ENCODE measurements at regions of chr4 and their contacts with region 1.

Region 1: DNA sequence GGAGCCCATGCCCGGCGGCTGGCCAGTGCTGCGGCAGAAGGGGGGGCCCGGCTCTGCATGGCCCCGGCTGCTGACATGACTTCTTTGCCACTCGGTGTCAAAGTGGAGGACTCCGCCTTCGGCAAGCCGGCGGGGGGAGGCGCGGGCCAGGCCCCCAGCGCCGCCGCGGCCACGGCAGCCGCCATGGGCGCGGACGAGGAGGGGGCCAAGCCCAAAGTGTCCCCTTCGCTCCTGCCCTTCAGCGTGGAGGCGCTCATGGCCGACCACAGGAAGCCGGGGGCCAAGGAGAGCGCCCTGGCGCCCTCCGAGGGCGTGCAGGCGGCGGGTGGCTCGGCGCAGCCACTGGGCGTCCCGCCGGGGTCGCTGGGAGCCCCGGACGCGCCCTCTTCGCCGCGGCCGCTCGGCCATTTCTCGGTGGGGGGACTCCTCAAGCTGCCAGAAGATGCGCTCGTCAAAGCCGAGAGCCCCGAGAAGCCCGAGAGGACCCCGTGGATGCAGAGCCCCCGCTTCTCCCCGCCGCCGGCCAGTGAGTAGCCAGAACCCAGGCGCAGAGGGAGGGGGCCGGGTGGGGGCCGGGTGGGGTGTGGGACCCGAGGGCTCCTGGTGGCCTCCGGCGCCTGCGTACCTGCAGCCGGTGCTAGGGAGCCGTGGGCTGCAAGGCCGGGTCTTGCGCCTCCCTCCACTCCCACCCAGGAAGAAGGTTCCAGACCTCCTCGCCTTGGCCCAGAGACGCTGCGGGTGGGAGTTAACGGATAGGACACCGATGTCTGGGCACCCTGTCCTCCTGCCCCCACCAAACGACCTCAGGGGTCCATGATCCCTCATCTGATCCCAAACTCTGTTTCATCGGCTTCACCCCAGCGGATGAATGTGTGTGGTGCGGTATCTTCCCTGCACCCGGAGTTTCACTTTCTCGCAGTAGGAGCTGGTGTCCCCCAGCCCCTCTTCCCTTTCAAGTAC is 658 bp downstream of the MSX1 start:
- DNase-seq: no peak
- H3K4me3 ChIP-seq: peak overlapping the region; percentile 48 to 53
- H3K27ac ChIP-seq: peak overlapping the region; percentile 22 to 48
- H3K4me1 ChIP-seq: peaks cover 3% of the 10 kb centered on the region
- H3K27me3 ChIP-seq: peaks cover 46% of the 10 kb centered on the region
- CTCF ChIP-seq: no peak
- POLR2A ChIP-seq: no peak

Region 2: DNA sequence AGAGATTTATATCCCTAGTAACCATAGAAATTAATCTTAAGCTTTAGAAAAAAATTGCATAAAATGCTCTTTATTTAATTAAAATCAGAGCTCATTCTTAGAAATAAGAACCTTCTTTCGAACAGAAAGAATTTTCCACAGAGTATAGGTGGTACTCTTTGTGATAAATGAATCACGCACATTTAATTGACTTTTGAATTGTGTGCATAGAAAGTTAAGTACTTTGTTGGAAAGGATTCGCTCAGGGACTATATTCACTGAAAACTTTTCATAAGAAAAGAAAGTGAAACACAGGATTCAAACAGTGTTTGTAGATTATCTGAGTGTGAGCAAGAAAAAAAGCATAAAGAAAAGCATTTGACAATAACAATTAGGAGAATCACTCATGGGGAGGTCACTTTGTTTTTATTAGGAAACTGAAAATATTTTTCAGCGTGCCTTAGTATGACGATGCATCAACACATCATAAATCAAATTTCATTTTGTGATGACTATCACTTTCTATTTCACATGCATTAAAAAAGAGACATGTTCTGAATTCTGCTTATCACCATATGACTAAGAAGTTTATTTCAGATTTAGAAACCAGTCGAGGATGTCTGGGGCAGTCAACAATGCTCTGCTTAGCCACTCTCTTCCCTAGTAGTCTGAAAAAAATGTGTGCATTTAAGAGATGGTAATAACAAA is 367.8 kb before region 1 on chr4:
- intact Hi-C with region 1: loop called (anchors 5 kb)
- DNase-seq: no peak
- H3K4me3 ChIP-seq: no peak overlapping the region
- H3K27ac ChIP-seq: no peak overlapping the region
- H3K4me1 ChIP-seq: no peaks in the 10 kb centered on the region
- H3K27me3 ChIP-seq: no peaks in the 10 kb centered on the region
- CTCF ChIP-seq: no peak
- POLR2A ChIP-seq: no peak

Region 3: GRCh38 chr4:4810092-4810774 is 49.9 kb before region 1 on chr4:
- intact Hi-C with region 1: no loop called
- DNase-seq: no peak
- H3K4me3 ChIP-seq: no peak overlapping the region
- H3K27ac ChIP-seq: no peak overlapping the region
- H3K4me1 ChIP-seq: no peaks in the 10 kb centered on the region
- H3K27me3 ChIP-seq: no peaks in the 10 kb centered on the region
- CTCF ChIP-seq: no peak
- POLR2A ChIP-seq: no peak

Measured in prostate gland (tissue), 2 donors.